ENCODE measurements at regions of chr10 and their contacts with region 1.

Region 1: GRCh38 chr10:132446661-132447194 is 49.7 kb downstream of the PWWP2B start:
- DNase-seq: peak in 8 of 9 donors; percentile 58 to 75 (median 70)
- ATAC-seq: peak; percentile 44
- H3K4me3 ChIP-seq: peak overlapping the region; percentile 60
- H3K4me3 Mint-ChIP-seq: peak overlapping the region; percentile 50 to 89 (median 78)
- H3K27ac ChIP-seq: peak overlapping the region; percentile 98
- H3K27ac Mint-ChIP-seq: peak overlapping the region; percentile 96 to 100 (median 98)
- H3K4me1 ChIP-seq: peaks cover 21 to 50% of the 10 kb centered on the region in 2 donors
- H3K4me1 Mint-ChIP-seq: peaks cover 25 to 64% (median 42%) of the 10 kb centered on the region in 7 donors
- H3K27me3 ChIP-seq: no peaks in the 10 kb centered on the region
- H3K27me3 Mint-ChIP-seq: no peaks in the 10 kb centered on the region

Region 2: GRCh38 chr10:131900350-131901146 is 546.2 kb before region 1 on chr10 and contains the start of gene PPP2R2D:
- CTCF ChIA-PET with region 1: no interaction called
- POLR2A ChIA-PET with region 1: no interaction called
- intact Hi-C with region 1: loop called (anchors 5 kb)
- DNase-seq: peak; percentile 95 to 99 (median 97)
- ATAC-seq: peak; percentile 90
- H3K4me3 ChIP-seq: peak within 1 kb of the TSS; percentile 64
- H3K4me3 Mint-ChIP-seq: peak within 1 kb of the TSS; percentile 90 to 95 (median 92)
- H3K27ac ChIP-seq: peak within 1 kb of the TSS; percentile 94
- H3K27ac Mint-ChIP-seq: peak within 1 kb of the TSS; percentile 86 to 97 (median 93)
- H3K4me1 ChIP-seq: peaks cover 34 to 40% of the 10 kb centered on the region in 2 donors
- H3K4me1 Mint-ChIP-seq: peaks cover 30 to 67% (median 61%) of the 10 kb centered on the region in 7 donors
- H3K27me3 ChIP-seq: no peaks in the 10 kb centered on the region
- H3K27me3 Mint-ChIP-seq: peaks cover 0 to 18% (median 0%) of the 10 kb centered on the region in 5 donors
- total RNA-seq, gene PPP2R2D: 37.1 to 61.3 (median 40.1) TPM

Region 3: DNA sequence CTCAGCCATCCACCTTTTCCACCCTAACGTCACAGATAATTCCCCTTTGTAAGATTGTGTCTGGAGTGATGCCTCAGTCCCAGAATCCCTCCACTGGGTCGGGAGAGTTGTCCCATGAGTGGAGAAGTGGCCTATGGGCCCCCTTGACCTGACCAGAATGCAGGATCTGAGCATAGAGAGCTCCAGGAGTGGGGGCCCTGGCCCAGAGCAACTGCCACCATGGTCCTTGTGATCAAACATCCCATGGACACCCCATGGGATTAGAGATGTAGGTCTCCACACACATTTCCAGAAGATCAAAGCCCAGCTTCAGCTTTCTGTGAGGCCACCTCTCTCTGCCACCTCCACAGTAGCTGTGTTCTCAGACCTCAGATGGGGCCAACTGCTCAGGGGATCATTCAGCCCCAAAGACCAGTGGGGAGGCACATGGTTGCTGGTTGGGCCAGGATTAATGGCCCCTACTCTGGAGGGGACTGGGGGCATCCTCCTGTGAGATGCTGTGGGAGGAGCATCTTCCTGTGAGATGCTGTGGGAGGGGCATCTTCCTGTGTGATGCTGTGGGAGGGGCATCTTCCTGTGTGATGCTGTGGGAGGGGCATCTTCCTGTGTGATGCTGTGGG is 288.5 kb before region 1 on chr10:
- CTCF ChIA-PET with region 1: no interaction called
- POLR2A ChIA-PET with region 1: no interaction called
- intact Hi-C with region 1: loop called (anchors 1 to 5 kb)
- DNase-seq: peak in 8 of 9 donors; percentile 51 to 71 (median 65)
- ATAC-seq: peak; percentile 58
- H3K4me3 ChIP-seq: no peak overlapping the region
- H3K4me3 Mint-ChIP-seq: peak overlapping the region in 4 of 10 donors; percentile 14 to 64 (median 30)
- H3K27ac ChIP-seq: peak overlapping the region; percentile 72
- H3K27ac Mint-ChIP-seq: peak overlapping the region in 8 of 9 donors; percentile 76 to 100 (median 95)
- H3K4me1 ChIP-seq: peaks cover 23 to 32% of the 10 kb centered on the region in 2 donors
- H3K4me1 Mint-ChIP-seq: peaks cover 13 to 46% (median 34%) of the 10 kb centered on the region in 7 donors
- H3K27me3 ChIP-seq: no peaks in the 10 kb centered on the region
- H3K27me3 Mint-ChIP-seq: no peaks in the 10 kb centered on the region

Region 4: GRCh38 chr10:132387764-132388210 is 58.9 kb before region 1 on chr10:
- CTCF ChIA-PET with region 1: interaction called, 7 read pairs
- POLR2A ChIA-PET with region 1: interaction called, 7 read pairs
- intact Hi-C with region 1: loop called in 1 of 2 experiments (anchors 1 kb)
- DNase-seq: peak; percentile 63 to 87 (median 77)
- ATAC-seq: peak; percentile 94
- H3K4me3 ChIP-seq: peak overlapping the region; percentile 35
- H3K4me3 Mint-ChIP-seq: peak overlapping the region in 9 of 10 donors; percentile 29 to 76 (median 62)
- H3K27ac ChIP-seq: peak overlapping the region; percentile 2
- H3K27ac Mint-ChIP-seq: peak overlapping the region in 7 of 9 donors; percentile 43 to 82 (median 70)
- H3K4me1 ChIP-seq: peaks cover 5 to 6% of the 10 kb centered on the region in 2 donors
- H3K4me1 Mint-ChIP-seq: peaks cover 3 to 22% (median 11%) of the 10 kb centered on the region in 7 donors
- H3K27me3 ChIP-seq: no peaks in the 10 kb centered on the region
- H3K27me3 Mint-ChIP-seq: no peaks in the 10 kb centered on the region

Region 5: GRCh38 chr10:132421392-132421877 is 25.3 kb before region 1 on chr10:
- CTCF ChIA-PET with region 1: interaction called, 16 read pairs
- POLR2A ChIA-PET with region 1: interaction called, 4 read pairs
- intact Hi-C with region 1: loop called in 1 of 2 experiments (anchors 2 kb)
- DNase-seq: no peak
- ATAC-seq: peak; percentile 75
- H3K4me3 ChIP-seq: no peak overlapping the region
- H3K4me3 Mint-ChIP-seq: peak overlapping the region in 7 of 10 donors; percentile 2 to 63 (median 51)
- H3K27ac ChIP-seq: peak overlapping the region; percentile 50
- H3K27ac Mint-ChIP-seq: peak overlapping the region in 6 of 9 donors; percentile 34 to 93 (median 78)
- H3K4me1 ChIP-seq: peaks cover 0 to 33% of the 10 kb centered on the region in 2 donors
- H3K4me1 Mint-ChIP-seq: peaks cover 5 to 39% (median 28%) of the 10 kb centered on the region in 7 donors
- H3K27me3 ChIP-seq: no peaks in the 10 kb centered on the region
- H3K27me3 Mint-ChIP-seq: peaks cover 0 to 1% (median 0%) of the 10 kb centered on the region in 5 donors